Activated CD4-positive, alpha-beta T cell treated with anti-CD3 and anti-CD28 coated beads for 36 hours (primary cell): ENCODE measurements at regions of chr16 and their contacts with region 1.

Region 1: DNA sequence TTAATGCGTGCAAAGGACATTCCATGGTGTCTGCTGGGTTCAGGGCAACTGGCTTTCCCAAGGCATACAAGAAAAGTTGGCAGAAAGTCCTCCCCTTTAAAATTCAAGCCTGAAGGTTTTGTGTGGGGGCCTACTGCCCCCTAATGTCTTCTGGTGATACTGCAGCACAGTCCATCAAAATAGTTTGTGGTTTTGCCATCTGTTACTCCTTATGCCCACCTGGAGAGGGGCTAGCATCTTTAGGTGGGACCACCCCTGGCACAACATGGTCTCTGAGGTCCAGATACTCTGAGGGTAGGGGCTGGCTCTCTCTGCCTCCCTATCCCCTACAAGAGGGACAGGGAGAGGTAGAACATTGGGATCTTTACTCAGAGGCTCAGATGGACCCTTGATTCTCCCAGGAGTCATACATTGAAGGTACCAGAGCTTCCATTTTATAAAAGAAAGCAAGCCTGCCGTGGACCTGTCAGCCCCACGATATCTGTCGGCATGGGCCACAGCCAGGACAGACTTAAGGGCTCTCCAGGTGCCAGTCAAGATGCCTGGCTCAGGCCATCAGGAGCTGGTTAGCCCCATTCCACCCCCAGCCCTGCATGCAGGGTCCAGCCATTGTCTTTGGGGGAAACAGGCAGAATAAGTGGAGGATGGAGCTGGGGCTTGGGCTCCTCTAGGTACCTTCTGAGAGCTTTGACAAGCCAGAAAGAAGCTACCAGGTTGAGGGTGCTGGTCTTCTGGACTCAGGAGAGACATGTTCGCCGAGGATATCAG is 6.3 kb downstream of the ESRP2 start:
- DNase-seq: peak; percentile 60
- ATAC-seq: no peak
- H3K4me3 Mint-ChIP-seq: no peak overlapping the region
- H3K27ac Mint-ChIP-seq: peak overlapping the region; percentile 48
- H3K4me1 Mint-ChIP-seq: peaks cover 48% of the 10 kb centered on the region
- H3K27me3 Mint-ChIP-seq: no peaks in the 10 kb centered on the region

Region 2: DNA sequence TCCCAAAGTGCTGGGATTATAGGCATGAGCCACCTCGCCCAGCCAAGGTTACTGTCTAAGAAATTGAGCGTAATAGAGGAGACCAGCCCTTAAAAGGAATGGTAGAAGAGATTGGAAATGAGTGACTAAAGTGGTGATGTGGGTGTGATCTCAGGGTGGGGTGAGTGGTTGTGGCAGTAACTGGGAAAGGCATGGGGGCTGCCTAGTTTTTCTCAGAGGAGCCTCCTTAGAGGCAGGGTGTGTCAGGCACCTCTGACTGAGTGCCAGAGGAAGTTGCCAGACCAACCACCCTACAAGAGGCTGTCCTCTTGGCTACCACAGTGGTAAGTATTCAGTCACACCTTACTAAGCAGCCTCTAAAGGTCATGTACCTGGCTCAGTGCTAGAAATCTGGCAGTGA is 197.7 kb before region 1 on chr16:
- CTCF ChIA-PET with region 1: no interaction called
- POLR2A ChIA-PET with region 1: no interaction called
- intact Hi-C with region 1: no loop called
- DNase-seq: no peak
- ATAC-seq: peak; percentile 60
- H3K4me3 Mint-ChIP-seq: no peak overlapping the region
- H3K27ac Mint-ChIP-seq: no peak overlapping the region
- H3K4me1 Mint-ChIP-seq: no peaks in the 10 kb centered on the region
- H3K27me3 Mint-ChIP-seq: no peaks in the 10 kb centered on the region

Region 3: DNA sequence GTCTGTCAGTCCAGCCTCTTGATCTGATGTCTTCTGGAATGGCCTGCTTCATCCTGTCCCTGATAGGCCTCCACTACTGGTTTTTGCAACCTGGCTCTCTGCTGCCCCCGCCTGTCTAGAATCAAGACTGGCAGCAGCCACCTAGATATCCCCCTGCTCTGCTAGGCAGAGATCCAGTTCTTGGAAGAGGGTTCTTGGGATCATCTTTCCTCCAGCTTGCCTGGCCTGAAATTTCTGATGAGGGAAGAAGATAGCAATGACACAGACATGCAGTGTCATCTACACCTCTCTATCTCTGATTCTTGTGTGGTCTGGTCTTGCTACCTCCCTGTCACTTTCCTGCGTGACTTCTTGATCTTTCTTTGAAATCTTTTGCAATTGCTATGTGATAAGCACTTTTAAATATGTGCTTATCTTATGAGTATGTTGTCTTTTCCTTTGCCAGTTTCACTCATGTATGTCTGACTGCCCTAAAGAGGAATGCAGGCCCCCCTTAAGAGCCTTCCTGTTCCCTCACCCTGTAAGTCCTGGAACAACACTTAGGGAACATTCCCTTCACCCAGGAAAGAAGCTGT is 164.7 kb before region 1 on chr16:
- CTCF ChIA-PET with region 1: interaction called, 7 read pairs
- POLR2A ChIA-PET with region 1: no interaction called
- intact Hi-C with region 1: loop called in 1 of 2 experiments (anchors 1 kb)
- DNase-seq: peak; percentile 85
- ATAC-seq: peak; percentile 81
- H3K4me3 Mint-ChIP-seq: no peak overlapping the region
- H3K27ac Mint-ChIP-seq: peak overlapping the region; percentile 69
- H3K4me1 Mint-ChIP-seq: peaks cover 67% of the 10 kb centered on the region
- H3K27me3 Mint-ChIP-seq: no peaks in the 10 kb centered on the region

Region 4: DNA sequence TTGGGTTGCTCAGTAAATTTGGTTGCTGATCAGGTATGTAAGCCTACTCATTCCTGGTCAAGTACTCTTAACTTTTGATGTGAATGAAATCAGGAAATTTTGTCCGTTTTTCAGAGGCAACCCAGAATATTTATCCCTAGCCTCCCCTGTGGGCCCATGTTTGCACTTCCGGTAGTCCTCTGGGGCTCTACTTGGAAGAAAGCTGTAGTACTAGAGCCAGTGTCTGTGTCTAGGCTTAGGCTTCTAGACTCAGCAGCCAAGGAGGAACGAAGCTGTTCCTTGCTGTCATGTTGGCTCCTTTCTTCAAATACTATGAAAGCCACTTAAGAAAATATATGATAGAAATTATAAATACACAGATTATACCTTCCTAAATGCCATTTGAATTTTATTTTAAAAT is 14.9 kb before region 1 on chr16:
- CTCF ChIA-PET with region 1: interaction called, 21 read pairs
- POLR2A ChIA-PET with region 1: no interaction called
- intact Hi-C with region 1: no loop called
- DNase-seq: no peak
- ATAC-seq: no peak
- H3K4me3 Mint-ChIP-seq: no peak overlapping the region
- H3K27ac Mint-ChIP-seq: no peak overlapping the region
- H3K4me1 Mint-ChIP-seq: peaks cover 33% of the 10 kb centered on the region
- H3K27me3 Mint-ChIP-seq: no peaks in the 10 kb centered on the region